Vagina (tissue), 2 donors: ENCODE measurements at regions of chr11 and their contacts with region 1.

Region 1: DNA sequence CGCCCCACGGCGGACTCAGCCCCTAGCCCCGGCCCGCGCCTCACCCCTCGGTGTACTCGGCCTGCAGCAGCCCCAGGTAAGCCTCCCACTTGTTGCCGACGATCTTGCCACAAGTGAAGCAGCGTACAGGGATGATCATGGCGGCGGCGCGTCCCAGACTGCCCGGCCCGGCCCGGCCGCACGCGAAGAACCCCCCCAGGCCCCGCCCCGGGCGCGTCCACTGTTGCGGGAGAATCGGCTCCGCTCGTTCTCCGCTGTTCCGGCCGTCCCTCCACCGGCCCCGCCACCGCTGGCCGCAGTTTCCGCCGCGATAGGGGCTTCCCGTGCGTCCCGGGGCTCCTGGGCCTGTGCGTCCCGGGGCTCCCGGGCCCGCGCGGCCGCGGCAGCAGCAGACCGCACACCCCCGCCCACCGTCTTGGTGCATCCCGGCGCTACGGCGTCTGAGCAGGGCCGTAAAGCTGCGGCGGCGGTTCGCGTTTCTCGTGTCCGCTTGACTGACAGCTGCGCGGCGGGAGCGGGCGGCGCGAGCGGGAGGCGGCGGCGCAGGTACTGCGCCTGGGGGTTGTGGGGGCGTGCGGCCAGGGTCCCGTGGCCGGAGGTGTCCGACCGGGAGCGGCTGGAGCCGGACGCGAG is at the starts of genes POLR2L and TSPAN4:
- DNase-seq: no peak
- H3K4me3 ChIP-seq: peak within 1 kb of the TSS; percentile 82 to 99
- H3K27ac ChIP-seq: peak within 1 kb of the TSS; percentile 86
- H3K4me1 ChIP-seq: peaks cover 90% of the 10 kb centered on the region
- H3K27me3 ChIP-seq: no peaks in the 10 kb centered on the region
- CTCF ChIP-seq: peak in 1 of 3 experiments; percentile 25
- POLR2A ChIP-seq: peak in 1 of 2 donors; percentile 74
- total RNA-seq, gene POLR2L: 53.8 TPM
- total RNA-seq, gene TSPAN4: 99.0 TPM

Region 2: GRCh38 chr11:809287-810039 is 33.0 kb before region 1 on chr11 and contains the start of gene RPLP2:
- intact Hi-C with region 1: loop called (anchors 5 kb)
- DNase-seq: peak in 1 of 2 donors; percentile 99
- H3K4me3 ChIP-seq: peak within 1 kb of the TSS; percentile 86 to 98
- H3K27ac ChIP-seq: peak within 1 kb of the TSS; percentile 96
- H3K4me1 ChIP-seq: peaks cover 42% of the 10 kb centered on the region
- H3K27me3 ChIP-seq: no peaks in the 10 kb centered on the region
- CTCF ChIP-seq: peak in 1 of 3 experiments; percentile 4
- POLR2A ChIP-seq: peak in 1 of 2 donors; percentile 90
- total RNA-seq, gene RPLP2: 1,068 TPM